ENCODE measurements at regions of chr11 and their contacts with region 1.

Region 1: GRCh38 chr11:46006418-46007070 is 84.1 kb downstream of the LARGE2 start:
- DNase-seq: no peak
- ATAC-seq: peak; percentile 90
- H3K4me3 Mint-ChIP-seq: no peak overlapping the region
- H3K27ac Mint-ChIP-seq: no peak overlapping the region
- H3K4me1 Mint-ChIP-seq: peaks cover 2% of the 10 kb centered on the region
- H3K27me3 Mint-ChIP-seq: no peaks in the 10 kb centered on the region

Region 2: DNA sequence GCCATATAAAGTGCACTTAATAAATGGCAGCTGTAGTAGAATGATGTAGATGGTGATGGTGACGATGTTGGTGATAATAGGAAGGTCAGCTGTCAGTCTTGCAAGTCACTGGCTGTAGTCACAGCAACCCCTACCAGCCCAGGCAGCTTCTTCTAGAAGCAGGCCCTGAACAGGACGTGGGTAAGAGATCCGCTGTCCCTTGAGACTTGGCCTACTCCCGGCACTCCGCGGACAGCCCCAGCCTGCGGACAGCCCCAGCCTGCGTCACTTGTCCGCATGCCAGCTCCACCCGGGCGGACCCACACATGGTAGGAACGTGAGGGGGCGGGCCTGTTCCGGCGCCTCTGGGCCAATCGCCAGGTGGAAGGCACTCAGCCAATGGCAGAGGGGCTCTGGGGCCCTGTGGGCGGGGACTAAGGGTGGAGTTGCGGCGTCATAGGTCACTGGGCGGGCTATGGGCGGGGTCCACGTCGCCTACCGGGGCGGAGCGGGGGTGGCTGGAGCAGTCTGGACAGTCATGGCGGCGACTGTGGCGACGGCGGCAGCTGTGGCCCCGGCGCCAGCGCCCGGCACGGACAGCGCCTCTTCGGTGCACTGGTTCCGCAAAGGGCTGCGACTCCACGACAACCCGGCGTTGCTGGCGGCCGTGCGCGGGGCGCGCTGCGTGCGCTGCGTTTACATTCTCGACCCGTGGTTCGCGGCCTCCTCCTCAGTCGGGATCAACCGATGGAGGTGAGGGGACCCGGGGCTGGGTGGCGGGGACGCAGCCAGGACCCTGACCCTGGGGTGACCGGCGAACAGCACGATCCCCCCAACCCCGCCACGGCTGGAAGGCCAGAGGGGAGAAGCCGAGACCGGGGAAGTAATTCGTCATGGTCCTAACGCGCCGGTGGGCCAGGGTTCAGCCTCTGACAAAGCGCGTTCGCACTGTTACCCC is 159.3 kb before region 1 on chr11 and contains the start of gene CRY2:
- CTCF ChIA-PET with region 1: interaction called, 17 read pairs
- DNase-seq: peak; percentile 99
- ATAC-seq: peak; percentile 89
- H3K4me3 Mint-ChIP-seq: peak within 1 kb of the TSS; percentile 76
- H3K27ac Mint-ChIP-seq: peak within 1 kb of the TSS; percentile 74
- H3K4me1 Mint-ChIP-seq: peaks cover 48% of the 10 kb centered on the region
- H3K27me3 Mint-ChIP-seq: peaks cover 19% of the 10 kb centered on the region
- total RNA-seq, gene CRY2: 22.5 to 23.3 TPM

Region 3: GRCh38 chr11:45872513-45873356 is 133.8 kb before region 1 on chr11:
- CTCF ChIA-PET with region 1: interaction called, 24 read pairs
- DNase-seq: peak; percentile 54
- ATAC-seq: peak; percentile 80
- H3K4me3 Mint-ChIP-seq: no peak overlapping the region
- H3K27ac Mint-ChIP-seq: no peak overlapping the region
- H3K4me1 Mint-ChIP-seq: no peaks in the 10 kb centered on the region
- H3K27me3 Mint-ChIP-seq: no peaks in the 10 kb centered on the region

Region 4: GRCh38 chr11:45917623-45918330 is 88.8 kb before region 1 on chr11 and contains the start of gene PEX16:
- CTCF ChIA-PET with region 1: interaction called, 11 read pairs
- DNase-seq: peak; percentile 98
- ATAC-seq: peak; percentile 91
- H3K4me3 Mint-ChIP-seq: peak within 1 kb of the TSS; percentile 92
- H3K27ac Mint-ChIP-seq: peak within 1 kb of the TSS; percentile 94
- H3K4me1 Mint-ChIP-seq: peaks cover 39% of the 10 kb centered on the region
- H3K27me3 Mint-ChIP-seq: peaks cover 6% of the 10 kb centered on the region
- total RNA-seq, gene PEX16: 45.9 to 53.9 TPM

Region 5: DNA sequence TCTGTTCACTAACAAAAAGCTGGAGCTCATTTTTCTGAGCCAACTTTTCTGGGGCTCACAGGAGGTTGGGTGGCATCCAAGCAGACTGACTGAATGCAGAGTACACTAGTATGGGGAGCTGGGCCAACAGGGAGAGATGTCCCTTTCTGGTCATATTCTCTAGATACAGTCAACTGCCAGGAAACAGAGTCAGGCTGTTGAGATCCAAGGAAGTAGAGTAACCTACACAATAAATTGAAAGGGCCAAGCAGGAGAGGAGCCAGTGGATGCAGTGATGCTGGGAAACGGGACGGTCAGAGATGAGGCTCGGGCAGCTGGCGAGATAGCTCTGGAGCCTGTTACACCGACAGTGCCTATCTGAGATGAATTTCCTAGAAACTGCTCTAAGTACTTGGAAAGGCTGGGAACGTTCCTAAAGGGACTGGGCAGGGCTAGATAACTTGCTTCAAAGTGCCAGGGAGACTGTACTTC is 13.0 kb before region 1 on chr11:
- CTCF ChIA-PET with region 1: interaction called, 11 read pairs
- DNase-seq: no peak
- ATAC-seq: no peak
- H3K4me3 Mint-ChIP-seq: no peak overlapping the region
- H3K27ac Mint-ChIP-seq: no peak overlapping the region
- H3K4me1 Mint-ChIP-seq: no peaks in the 10 kb centered on the region
- H3K27me3 Mint-ChIP-seq: no peaks in the 10 kb centered on the region

Region 6: DNA sequence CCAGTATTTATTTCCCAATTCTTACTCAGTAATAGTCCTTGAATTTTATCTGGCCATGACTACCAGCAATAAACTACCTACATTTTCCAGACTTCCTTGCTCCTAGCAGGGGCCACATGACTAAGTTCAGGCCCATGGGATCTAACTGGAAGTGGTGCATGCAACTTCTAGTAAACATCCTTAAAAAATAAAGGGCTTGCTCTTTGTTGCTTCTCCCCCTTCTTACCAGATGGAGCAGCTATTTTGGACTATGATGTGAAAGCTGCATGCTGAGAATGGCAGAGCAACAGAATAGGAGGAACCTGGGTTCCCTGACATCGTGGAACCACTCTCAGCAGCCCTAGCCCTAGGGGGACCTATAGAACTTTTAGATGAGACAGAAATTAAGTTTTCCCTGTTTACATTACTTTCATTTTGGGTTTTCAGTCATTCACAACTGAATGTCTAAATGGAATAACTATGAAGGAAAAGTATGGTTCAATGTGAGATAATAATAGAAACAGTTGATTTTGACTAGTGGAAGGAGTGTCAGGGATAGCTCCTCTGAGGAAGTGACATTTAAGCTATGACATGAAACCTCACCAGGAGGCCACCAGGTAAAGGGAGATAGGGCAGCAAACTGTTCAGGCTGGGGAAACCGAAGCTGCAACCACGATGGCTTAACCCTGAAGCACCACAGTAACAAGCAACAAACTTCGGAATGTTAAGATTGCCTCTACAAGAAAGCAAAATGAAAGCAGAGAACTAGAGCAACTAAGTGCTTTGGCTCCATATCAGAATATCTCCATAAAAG is 65.8 kb after region 1 on chr11:
- CTCF ChIA-PET with region 1: no interaction called
- DNase-seq: no peak
- ATAC-seq: no peak
- H3K4me3 Mint-ChIP-seq: no peak overlapping the region
- H3K27ac Mint-ChIP-seq: no peak overlapping the region
- H3K4me1 Mint-ChIP-seq: peaks cover 9% of the 10 kb centered on the region
- H3K27me3 Mint-ChIP-seq: no peaks in the 10 kb centered on the region

Region 7: DNA sequence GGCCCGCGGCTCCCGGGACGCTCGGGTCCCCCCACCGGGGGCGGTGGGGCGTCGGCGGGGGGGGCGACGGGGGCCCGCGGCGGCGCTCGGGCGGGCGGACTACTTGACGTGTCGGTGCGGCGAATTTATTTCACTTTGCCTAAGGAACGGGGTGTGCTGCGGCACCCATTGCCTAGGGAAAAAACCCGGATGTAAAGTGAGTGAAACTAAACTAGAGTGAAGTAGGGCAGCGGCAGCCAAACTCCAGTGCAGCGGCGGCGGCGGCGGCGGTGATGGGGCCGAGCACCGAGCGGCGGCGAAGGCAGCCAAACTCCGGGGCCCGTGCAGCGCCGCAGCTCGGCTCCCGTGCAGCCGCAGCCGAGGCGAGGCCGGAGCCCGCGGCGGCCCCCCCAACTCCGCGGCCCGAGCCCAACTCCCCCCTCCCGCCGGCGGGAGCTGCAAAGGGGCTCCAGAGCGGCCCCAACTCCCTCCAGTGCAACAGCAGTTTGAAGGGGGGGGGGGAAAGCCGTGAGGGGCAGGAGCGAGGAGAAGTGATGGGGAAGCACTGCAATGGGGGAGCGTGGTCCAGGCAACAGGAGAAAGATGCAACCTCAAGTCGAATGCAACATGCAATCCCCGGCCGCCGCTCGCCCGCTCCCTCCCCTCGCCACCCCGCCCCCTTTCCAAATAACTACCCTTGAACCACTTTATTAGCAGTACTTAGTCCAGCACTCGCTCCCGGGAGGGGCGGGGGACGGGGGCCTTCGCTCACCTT is 115.4 kb after region 1 on chr11:
- CTCF ChIA-PET with region 1: no interaction called
- DNase-seq: peak; percentile 83
- ATAC-seq: peak; percentile 62
- H3K4me3 Mint-ChIP-seq: peak overlapping the region; percentile 81
- H3K27ac Mint-ChIP-seq: peak overlapping the region; percentile 93
- H3K4me1 Mint-ChIP-seq: peaks cover 39% of the 10 kb centered on the region
- H3K27me3 Mint-ChIP-seq: no peaks in the 10 kb centered on the region